WTC11 (cell line): ENCODE measurements at regions of chr3 and their contacts with region 1.

Region 1: GRCh38 chr3:187164885-187165543 is 25.7 kb upstream of the RPL39L start:
- DNase-seq: peak; percentile 53
- ATAC-seq: peak; percentile 93
- H3K4me3 Mint-ChIP-seq: peak overlapping the region; percentile 2
- H3K27ac Mint-ChIP-seq: peak overlapping the region; percentile 42; the same call in 1 of the 2 replicates
- H3K4me1 Mint-ChIP-seq: peaks cover 72% of the 10 kb centered on the region
- H3K27me3 Mint-ChIP-seq: no peaks in the 10 kb centered on the region
- CTCF ChIP-seq: peak; percentile 69

Region 2: GRCh38 chr3:187072511-187072910 is 92.5 kb before region 1 on chr3:
- CTCF ChIA-PET with region 1: no interaction called
- POLR2A ChIA-PET with region 1: no interaction called
- DNase-seq: no peak
- ATAC-seq: peak; percentile 28
- H3K4me3 Mint-ChIP-seq: no peak overlapping the region
- H3K27ac Mint-ChIP-seq: peak overlapping the region; percentile 42; the same call in 1 of the 2 replicates
- H3K4me1 Mint-ChIP-seq: peaks cover 14% of the 10 kb centered on the region
- H3K27me3 Mint-ChIP-seq: no peaks in the 10 kb centered on the region
- CTCF ChIP-seq: no peak

Region 3: GRCh38 chr3:187112934-187113793 is 51.9 kb before region 1 on chr3:
- CTCF ChIA-PET with region 1: interaction called, 55 read pairs
- POLR2A ChIA-PET with region 1: no interaction called
- DNase-seq: no peak
- ATAC-seq: peak; percentile 86
- H3K4me3 Mint-ChIP-seq: no peak overlapping the region
- H3K27ac Mint-ChIP-seq: no peak overlapping the region
- H3K4me1 Mint-ChIP-seq: peaks cover 7% of the 10 kb centered on the region
- H3K27me3 Mint-ChIP-seq: no peaks in the 10 kb centered on the region
- CTCF ChIP-seq: peak; percentile 16

Region 4: GRCh38 chr3:187125319-187126031 is 39.5 kb before region 1 on chr3:
- CTCF ChIA-PET with region 1: no interaction called
- POLR2A ChIA-PET with region 1: no interaction called
- DNase-seq: no peak
- ATAC-seq: no peak
- H3K4me3 Mint-ChIP-seq: no peak overlapping the region
- H3K27ac Mint-ChIP-seq: no peak overlapping the region
- H3K4me1 Mint-ChIP-seq: peaks cover 11% of the 10 kb centered on the region
- H3K27me3 Mint-ChIP-seq: no peaks in the 10 kb centered on the region
- CTCF ChIP-seq: no peak

Region 5: DNA sequence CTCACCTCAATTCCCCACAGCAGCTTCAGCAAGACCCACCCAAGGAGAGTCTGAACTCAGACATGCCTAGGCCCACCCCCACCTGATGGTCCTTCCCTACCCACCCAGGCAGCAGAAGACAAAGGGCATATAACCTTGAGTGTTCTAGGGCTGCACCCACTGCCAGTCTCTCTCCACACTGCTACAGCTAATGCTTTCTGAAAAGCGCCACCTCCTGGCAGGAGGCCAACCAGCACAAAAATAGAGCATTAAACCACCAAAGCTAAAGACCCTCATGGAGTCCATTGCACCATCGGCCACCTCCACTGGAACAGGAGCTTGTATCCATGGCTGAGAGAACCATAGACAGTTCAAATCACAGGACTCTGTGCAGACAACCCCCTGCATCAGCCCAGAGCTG is 14.4 kb before region 1 on chr3:
- CTCF ChIA-PET with region 1: interaction called, 48 read pairs
- POLR2A ChIA-PET with region 1: no interaction called
- DNase-seq: peak; percentile 57
- ATAC-seq: peak; percentile 64
- H3K4me3 Mint-ChIP-seq: no peak overlapping the region
- H3K27ac Mint-ChIP-seq: peak overlapping the region; percentile 91
- H3K4me1 Mint-ChIP-seq: peaks cover 39% of the 10 kb centered on the region
- H3K27me3 Mint-ChIP-seq: no peaks in the 10 kb centered on the region
- CTCF ChIP-seq: no peak; the same call in 1 of the 2 replicates

Region 6: DNA sequence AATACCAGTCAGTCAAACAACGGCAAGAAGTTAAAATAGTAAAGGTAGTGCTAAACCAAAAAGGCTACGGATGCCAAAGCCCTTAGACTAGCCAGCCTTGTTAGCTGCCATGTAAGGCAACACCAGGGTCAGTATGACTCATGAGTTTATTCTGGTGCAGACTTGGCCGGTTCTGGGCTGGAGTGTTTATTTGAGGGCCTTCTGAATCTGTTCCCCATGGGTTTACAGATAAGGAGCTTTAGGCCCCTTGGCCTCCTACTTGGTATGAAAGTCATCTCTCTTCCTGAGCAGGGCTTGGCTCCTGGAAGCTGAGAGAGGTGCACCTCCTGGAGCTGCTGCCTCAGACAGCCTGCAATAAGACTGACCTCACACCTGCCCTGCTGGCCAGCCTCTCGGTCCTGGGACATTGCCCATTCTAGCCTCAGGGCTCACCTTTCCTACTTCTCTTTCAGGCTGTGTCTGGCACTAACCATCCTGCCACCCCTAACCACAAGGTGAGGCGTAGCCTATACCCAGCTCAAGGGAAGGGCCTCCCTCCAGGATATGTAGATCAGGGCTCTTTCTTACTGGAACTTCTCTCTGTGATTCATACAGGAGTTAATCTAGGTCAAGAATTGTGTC is 21.9 kb after region 1 on chr3:
- CTCF ChIA-PET with region 1: interaction called, 13 read pairs
- POLR2A ChIA-PET with region 1: interaction called, 3 read pairs
- DNase-seq: no peak
- ATAC-seq: peak; percentile 18
- H3K4me3 Mint-ChIP-seq: no peak overlapping the region; the same call in 1 of the 2 replicates
- H3K27ac Mint-ChIP-seq: peak overlapping the region; percentile 98
- H3K4me1 Mint-ChIP-seq: peaks cover 76% of the 10 kb centered on the region
- H3K27me3 Mint-ChIP-seq: peaks cover 2% of the 10 kb centered on the region; the same call in 1 of the 2 replicates
- CTCF ChIP-seq: no peak

Region 7: GRCh38 chr3:187274977-187275338 is 109.9 kb after region 1 on chr3:
- CTCF ChIA-PET with region 1: interaction called, 10 read pairs
- POLR2A ChIA-PET with region 1: no interaction called
- DNase-seq: peak; percentile 77
- ATAC-seq: peak; percentile 99
- H3K4me3 Mint-ChIP-seq: peak overlapping the region; percentile 28; the same call in 1 of the 2 replicates
- H3K27ac Mint-ChIP-seq: peak overlapping the region; percentile 87
- H3K4me1 Mint-ChIP-seq: peaks cover 39% of the 10 kb centered on the region
- H3K27me3 Mint-ChIP-seq: no peaks in the 10 kb centered on the region
- CTCF ChIP-seq: no peak